ENCODE measurements at regions of chr6 and their contacts with region 1.

Region 1: GRCh38 chr6:101114703-101115102 is 233.6 kb upstream of the ASCC3 start:
- DNase-seq: peak; percentile 30
- H3K4me3 ChIP-seq: no peak overlapping the region
- H3K27ac ChIP-seq: no peak overlapping the region
- H3K4me1 ChIP-seq: no peaks in the 10 kb centered on the region
- H3K27me3 ChIP-seq: no peaks in the 10 kb centered on the region
- CTCF ChIP-seq: peak; percentile 52 to 76

Region 2: GRCh38 chr6:100775667-100776066 is 339.0 kb before region 1 on chr6:
- CTCF ChIA-PET with region 1: no interaction called
- dilution Hi-C with region 1: no loop called
- in situ Hi-C with region 1: no loop called
- intact Hi-C with region 1: loop called (anchors 10 kb)
- DNase-seq: no peak
- H3K4me3 ChIP-seq: no peak overlapping the region
- H3K27ac ChIP-seq: no peak overlapping the region
- H3K4me1 ChIP-seq: peaks cover 6% of the 10 kb centered on the region
- H3K27me3 ChIP-seq: no peaks in the 10 kb centered on the region
- CTCF ChIP-seq: peak in 1 of 2 donors; percentile 24

Region 3: GRCh38 chr6:101146389-101146788 is 31.7 kb after region 1 on chr6:
- CTCF ChIA-PET with region 1: no interaction called
- dilution Hi-C with region 1: no loop called
- in situ Hi-C with region 1: no loop called
- intact Hi-C with region 1: no loop called
- DNase-seq: peak; percentile 93
- H3K4me3 ChIP-seq: no peak overlapping the region
- H3K27ac ChIP-seq: no peak overlapping the region
- H3K4me1 ChIP-seq: peaks cover 11% of the 10 kb centered on the region
- H3K27me3 ChIP-seq: no peaks in the 10 kb centered on the region
- CTCF ChIP-seq: no peak

Region 4: GRCh38 chr6:101178748-101179147 is 64.0 kb after region 1 on chr6:
- CTCF ChIA-PET with region 1: no interaction called
- dilution Hi-C with region 1: no loop called
- in situ Hi-C with region 1: no loop called
- intact Hi-C with region 1: no loop called
- DNase-seq: no peak
- H3K4me3 ChIP-seq: no peak overlapping the region
- H3K27ac ChIP-seq: no peak overlapping the region
- H3K4me1 ChIP-seq: no peaks in the 10 kb centered on the region
- H3K27me3 ChIP-seq: peaks cover 3% of the 10 kb centered on the region
- CTCF ChIP-seq: no peak

Region 5: DNA sequence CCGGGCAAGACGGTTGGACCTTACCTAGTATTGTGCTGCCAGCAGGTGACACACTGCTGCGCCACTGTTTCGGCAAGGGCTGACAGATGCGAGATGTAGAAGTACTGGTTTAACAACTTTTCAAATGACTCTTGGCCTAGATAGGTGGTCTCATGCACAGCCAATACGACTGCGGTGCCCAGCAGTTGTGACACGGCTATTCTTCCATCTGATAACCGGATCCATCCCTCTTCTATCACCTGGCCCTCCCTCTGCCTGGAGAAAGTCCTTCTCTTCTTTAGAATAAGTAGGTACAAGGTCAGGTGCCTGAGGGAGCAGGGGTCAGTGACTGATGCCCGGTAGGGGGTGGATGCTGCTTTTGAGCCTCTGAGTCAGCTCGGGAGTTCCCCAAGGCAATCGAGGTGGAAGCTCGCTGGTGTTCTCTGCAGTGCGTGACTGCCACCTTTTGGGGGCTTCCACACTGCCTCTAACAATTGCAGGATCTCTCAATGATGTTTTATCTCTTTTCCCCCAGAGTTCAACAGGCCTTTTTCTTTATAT is 112.0 kb after region 1 on chr6:
- CTCF ChIA-PET with region 1: no interaction called
- dilution Hi-C with region 1: no loop called
- in situ Hi-C with region 1: no loop called
- intact Hi-C with region 1: loop called (anchors 5 kb)
- DNase-seq: peak; percentile 31
- H3K4me3 ChIP-seq: no peak overlapping the region
- H3K27ac ChIP-seq: no peak overlapping the region
- H3K4me1 ChIP-seq: no peaks in the 10 kb centered on the region
- H3K27me3 ChIP-seq: no peaks in the 10 kb centered on the region
- CTCF ChIP-seq: peak in 1 of 2 donors; percentile 19

Region 6: DNA sequence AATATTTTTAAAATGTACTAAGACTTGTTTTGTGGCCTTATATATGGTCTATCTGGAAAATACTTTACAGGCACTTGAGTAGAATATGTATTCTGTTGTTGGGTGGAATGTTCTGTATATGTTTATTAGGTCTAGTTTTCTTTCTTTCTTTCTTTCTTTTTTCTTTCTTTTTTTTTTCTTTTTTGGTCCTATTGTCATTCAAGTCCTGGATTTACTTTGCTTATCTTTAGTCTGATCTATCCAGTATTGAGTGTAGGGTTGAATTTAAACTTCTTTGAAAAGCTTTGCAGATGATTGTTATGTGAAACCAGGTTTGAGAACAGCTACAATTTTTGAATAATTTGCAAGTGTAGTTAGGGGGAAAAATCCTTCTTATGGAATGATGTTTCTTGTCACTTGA is 211.7 kb after region 1 on chr6:
- CTCF ChIA-PET with region 1: no interaction called
- dilution Hi-C with region 1: no loop called
- in situ Hi-C with region 1: no loop called
- intact Hi-C with region 1: no loop called
- DNase-seq: no peak
- H3K4me3 ChIP-seq: no peak overlapping the region
- H3K27ac ChIP-seq: no peak overlapping the region
- H3K4me1 ChIP-seq: no peaks in the 10 kb centered on the region
- H3K27me3 ChIP-seq: no peaks in the 10 kb centered on the region
- CTCF ChIP-seq: no peak

Region 7: GRCh38 chr6:101393251-101393828 is 278.6 kb after region 1 on chr6 and contains the start of gene GRIK2:
- CTCF ChIA-PET with region 1: no interaction called
- dilution Hi-C with region 1: no loop called
- in situ Hi-C with region 1: no loop called
- intact Hi-C with region 1: loop called (anchors 5 kb)
- DNase-seq: peak; percentile 46
- H3K4me3 ChIP-seq: peak within 1 kb of the TSS; percentile 46 to 61 (median 55)
- H3K27ac ChIP-seq: no peak within 1 kb of the TSS
- H3K4me1 ChIP-seq: peaks cover 12% of the 10 kb centered on the region
- H3K27me3 ChIP-seq: peaks cover 19% of the 10 kb centered on the region
- CTCF ChIP-seq: peak in 1 of 2 donors; percentile 59
- total RNA-seq, gene GRIK2: 1.4 to 2.8 TPM

Region 8: GRCh38 chr6:101640131-101640530 is 525.4 kb after region 1 on chr6:
- CTCF ChIA-PET with region 1: no interaction called
- dilution Hi-C with region 1: no loop called
- in situ Hi-C with region 1: no loop called
- intact Hi-C with region 1: loop called (anchors 10 kb)
- DNase-seq: no peak
- H3K4me3 ChIP-seq: no peak overlapping the region
- H3K27ac ChIP-seq: no peak overlapping the region
- H3K4me1 ChIP-seq: no peaks in the 10 kb centered on the region
- H3K27me3 ChIP-seq: no peaks in the 10 kb centered on the region
- CTCF ChIP-seq: no peak

Region 9: GRCh38 chr6:102114402-102114801 is 999.7 kb after region 1 on chr6:
- CTCF ChIA-PET with region 1: no interaction called
- dilution Hi-C with region 1: no loop called
- in situ Hi-C with region 1: no loop called
- intact Hi-C with region 1: loop called (anchors 5 kb)
- DNase-seq: peak; percentile 3
- H3K4me3 ChIP-seq: no peak overlapping the region
- H3K27ac ChIP-seq: no peak overlapping the region
- H3K4me1 ChIP-seq: no peaks in the 10 kb centered on the region
- H3K27me3 ChIP-seq: no peaks in the 10 kb centered on the region
- CTCF ChIP-seq: peak; percentile 43 to 64